Calu3 (cell line): ENCODE measurements at regions of chr13 and their contacts with region 1.

Region 1: GRCh38 chr13:48624858-48625257 is 28.9 kb upstream of the CYSLTR2 start:
- DNase-seq: no peak
- H3K4me3 Mint-ChIP-seq: no peak overlapping the region
- H3K27ac Mint-ChIP-seq: no peak overlapping the region
- H3K4me1 Mint-ChIP-seq: peaks cover 40% of the 10 kb centered on the region
- H3K27me3 Mint-ChIP-seq: no peaks in the 10 kb centered on the region
- CTCF ChIP-seq: no peak

Region 2: GRCh38 chr13:48078251-48078656 is 546.6 kb before region 1 on chr13:
- CTCF ChIA-PET with region 1: no interaction called
- intact Hi-C with region 1: no loop called
- DNase-seq: peak; percentile 14
- H3K4me3 Mint-ChIP-seq: no peak overlapping the region
- H3K27ac Mint-ChIP-seq: no peak overlapping the region
- H3K4me1 Mint-ChIP-seq: no peaks in the 10 kb centered on the region
- H3K27me3 Mint-ChIP-seq: no peaks in the 10 kb centered on the region
- CTCF ChIP-seq: no peak

Region 3: DNA sequence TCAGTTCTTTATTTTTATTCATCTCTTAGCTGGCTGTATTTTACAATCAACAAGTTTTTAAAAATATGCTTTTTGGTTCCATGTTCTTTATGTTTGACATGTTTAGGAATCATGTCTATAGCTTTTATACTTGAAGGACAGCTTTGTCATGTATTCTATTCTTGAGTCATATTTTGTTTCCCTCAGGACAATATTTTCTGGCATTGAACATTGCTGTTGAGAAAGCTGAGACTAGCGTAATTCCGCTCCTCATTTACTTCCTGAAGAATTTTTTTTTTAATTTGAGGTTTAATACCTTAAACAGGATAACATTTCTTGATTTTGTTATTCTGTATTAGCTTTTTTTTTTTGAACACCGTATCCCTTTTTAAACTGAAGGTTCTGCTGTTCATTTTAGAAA is 268.1 kb before region 1 on chr13:
- CTCF ChIA-PET with region 1: no interaction called
- intact Hi-C with region 1: no loop called
- DNase-seq: no peak
- H3K4me3 Mint-ChIP-seq: no peak overlapping the region
- H3K27ac Mint-ChIP-seq: no peak overlapping the region
- H3K4me1 Mint-ChIP-seq: no peaks in the 10 kb centered on the region
- H3K27me3 Mint-ChIP-seq: no peaks in the 10 kb centered on the region
- CTCF ChIP-seq: no peak

Region 4: DNA sequence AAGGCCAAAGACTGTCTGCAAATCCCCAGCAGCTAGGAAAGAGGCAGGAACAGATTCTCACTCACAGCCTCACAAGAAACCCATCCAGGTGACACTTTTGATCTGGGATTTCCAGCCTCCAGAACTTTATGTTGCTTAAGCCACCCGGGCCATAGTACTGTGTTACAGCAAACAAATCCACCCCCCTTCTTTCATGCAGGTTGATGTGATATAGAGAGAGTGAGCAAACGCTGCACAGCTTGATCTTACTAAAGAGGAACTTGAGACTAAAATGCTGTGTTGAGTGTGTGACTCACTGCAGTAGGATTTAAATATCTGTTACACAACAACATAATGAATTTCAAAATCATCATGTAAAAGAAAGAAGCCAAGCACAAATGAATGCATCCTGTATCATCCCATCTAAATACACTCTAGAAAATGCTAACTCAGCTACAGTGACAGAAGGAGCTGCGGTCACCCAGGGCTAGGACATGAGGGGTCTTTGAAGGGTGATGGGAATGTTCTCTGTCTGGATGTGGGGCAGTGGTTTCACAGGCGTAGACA is 124.1 kb before region 1 on chr13:
- CTCF ChIA-PET with region 1: no interaction called
- intact Hi-C with region 1: no loop called
- DNase-seq: no peak
- H3K4me3 Mint-ChIP-seq: no peak overlapping the region
- H3K27ac Mint-ChIP-seq: no peak overlapping the region
- H3K4me1 Mint-ChIP-seq: no peaks in the 10 kb centered on the region
- H3K27me3 Mint-ChIP-seq: no peaks in the 10 kb centered on the region
- CTCF ChIP-seq: no peak

Region 5: DNA sequence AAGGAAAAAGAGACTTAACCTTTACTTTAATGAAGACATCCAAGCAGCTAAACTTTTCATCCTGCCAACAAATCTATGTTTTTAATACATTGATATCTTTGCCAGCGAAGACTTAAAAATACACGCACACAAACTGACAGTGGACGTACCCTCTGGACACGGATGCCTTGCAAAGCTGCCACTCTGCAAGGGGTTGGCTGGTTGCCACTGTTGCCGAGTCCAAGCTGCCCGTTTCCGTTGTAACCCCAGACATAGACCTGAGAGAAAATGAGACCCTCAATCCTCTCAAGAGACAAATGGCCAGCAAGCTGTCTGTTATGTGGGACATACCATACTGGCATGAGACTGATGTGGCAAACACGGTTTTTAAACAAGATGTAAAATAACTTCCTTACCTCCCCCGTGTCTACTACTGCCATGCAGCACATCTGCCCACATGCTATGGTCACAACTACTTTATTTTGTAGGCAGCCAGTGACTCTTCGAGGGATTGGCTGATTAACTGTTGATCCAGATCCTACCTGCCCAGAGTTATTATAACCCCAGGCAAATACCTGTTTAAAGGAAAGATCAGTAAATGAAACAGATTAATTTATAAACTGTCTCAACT is 113.1 kb before region 1 on chr13:
- CTCF ChIA-PET with region 1: no interaction called
- intact Hi-C with region 1: no loop called
- DNase-seq: no peak
- H3K4me3 Mint-ChIP-seq: no peak overlapping the region
- H3K27ac Mint-ChIP-seq: no peak overlapping the region
- H3K4me1 Mint-ChIP-seq: no peaks in the 10 kb centered on the region
- H3K27me3 Mint-ChIP-seq: no peaks in the 10 kb centered on the region
- CTCF ChIP-seq: no peak

Region 6: GRCh38 chr13:48679911-48680680 is 55.2 kb after region 1 on chr13:
- CTCF ChIA-PET with region 1: no interaction called
- intact Hi-C with region 1: loop called (anchors 2 kb)
- DNase-seq: no peak
- H3K4me3 Mint-ChIP-seq: no peak overlapping the region
- H3K27ac Mint-ChIP-seq: no peak overlapping the region
- H3K4me1 Mint-ChIP-seq: no peaks in the 10 kb centered on the region
- H3K27me3 Mint-ChIP-seq: peaks cover 40% of the 10 kb centered on the region
- CTCF ChIP-seq: no peak